ENCODE measurements at regions of chr7 and their contacts with region 1.

Region 1: DNA sequence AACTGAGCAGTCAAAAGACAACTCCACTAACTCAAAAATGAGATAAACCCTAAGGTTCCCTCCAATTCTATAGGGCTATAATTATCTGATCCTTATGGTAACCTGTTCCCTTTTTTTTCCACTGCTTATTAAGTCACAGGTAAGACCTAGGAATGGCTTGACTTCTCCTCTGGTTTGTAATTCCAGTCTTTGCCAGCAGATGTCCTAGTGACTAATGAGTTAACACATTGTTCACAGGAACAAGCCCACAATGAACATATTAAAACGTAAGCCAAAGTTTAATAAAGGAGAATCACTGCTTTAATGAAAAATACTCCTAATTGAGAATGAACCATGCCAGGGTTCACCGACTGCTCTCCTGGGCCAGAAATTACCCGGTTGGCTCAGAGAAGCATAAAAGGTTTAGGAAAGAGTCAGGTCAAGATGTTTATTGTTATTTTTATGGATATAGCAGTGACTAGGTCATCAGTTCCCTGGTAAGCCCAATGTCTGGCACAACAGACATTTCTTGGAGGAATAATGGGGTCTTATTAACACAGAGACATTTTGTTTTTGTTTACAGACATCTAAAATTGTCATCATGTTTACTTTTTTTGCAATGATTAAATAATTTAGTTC is 120.1 kb downstream of the ELAPOR2 start:
- DNase-seq: no peak
- H3K4me3 ChIP-seq: no peak overlapping the region
- H3K27ac ChIP-seq: no peak overlapping the region
- H3K4me1 ChIP-seq: no peaks in the 10 kb centered on the region
- H3K27me3 ChIP-seq: no peaks in the 10 kb centered on the region
- CTCF ChIP-seq: peak; percentile 46 to 62 (median 56)
- POLR2A ChIP-seq: no peak

Region 2: GRCh38 chr7:87231256-87231655 is 291.9 kb after region 1 on chr7:
- intact Hi-C with region 1: loop called (anchors 10 kb)
- DNase-seq: no peak
- H3K4me3 ChIP-seq: no peak overlapping the region
- H3K27ac ChIP-seq: no peak overlapping the region
- H3K4me1 ChIP-seq: no peaks in the 10 kb centered on the region
- H3K27me3 ChIP-seq: no peaks in the 10 kb centered on the region
- CTCF ChIP-seq: no peak
- POLR2A ChIP-seq: no peak

Region 3: DNA sequence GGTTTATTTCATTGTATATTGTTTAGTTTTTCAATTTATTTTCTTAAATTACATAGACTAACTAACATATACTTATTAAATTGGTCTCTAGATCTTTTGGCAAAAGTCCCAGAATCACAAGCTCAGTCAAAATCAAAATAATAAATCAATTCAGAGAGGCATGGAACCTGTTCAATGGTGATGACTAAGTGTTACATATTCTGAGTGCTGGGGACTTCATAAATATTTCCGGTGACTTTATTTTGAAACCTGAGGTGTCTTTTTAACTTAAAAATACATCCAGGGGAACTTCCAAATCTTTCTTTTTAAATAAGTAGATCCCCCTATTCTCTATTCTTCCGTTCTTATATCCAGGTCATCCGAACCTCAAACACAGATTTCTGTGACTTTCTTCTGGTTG is 1730.6 kb after region 1 on chr7:
- intact Hi-C with region 1: no loop called
- DNase-seq: no peak
- H3K4me3 ChIP-seq: no peak overlapping the region
- H3K27ac ChIP-seq: no peak overlapping the region
- H3K4me1 ChIP-seq: no peaks in the 10 kb centered on the region
- H3K27me3 ChIP-seq: no peaks in the 10 kb centered on the region
- CTCF ChIP-seq: no peak
- POLR2A ChIP-seq: no peak